CD4-positive, alpha-beta T cell (primary cell): ENCODE measurements at regions of chr20 and their contacts with region 1.

Region 1: GRCh38 chr20:46681032-46681854 is 8.0 kb downstream of the TP53RK start:
- DNase-seq: peak; percentile 42 to 78 (median 60)
- ATAC-seq: peak; percentile 91
- H3K4me3 ChIP-seq: no peak overlapping the region
- H3K4me3 Mint-ChIP-seq: peak overlapping the region; percentile 56
- H3K27ac ChIP-seq: peak overlapping the region in 1 of 2 donors; percentile 22
- H3K27ac Mint-ChIP-seq: peak overlapping the region; percentile 37
- H3K4me1 ChIP-seq: peaks cover 16% of the 10 kb centered on the region
- H3K4me1 Mint-ChIP-seq: peaks cover 50% of the 10 kb centered on the region
- H3K27me3 ChIP-seq: no peaks in the 10 kb centered on the region
- H3K27me3 Mint-ChIP-seq: no peaks in the 10 kb centered on the region
- CTCF ChIP-seq: peak; percentile 87

Region 2: GRCh38 chr20:46022411-46023147 is 658.7 kb before region 1 on chr20:
- CTCF ChIA-PET with region 1: no interaction called
- POLR2A ChIA-PET with region 1: no interaction called
- intact Hi-C with region 1: loop called in 1 of 2 experiments (anchors 2 kb)
- DNase-seq: peak; percentile 59 to 85 (median 69)
- ATAC-seq: peak; percentile 59
- H3K4me3 ChIP-seq: peak overlapping the region; percentile 25
- H3K4me3 Mint-ChIP-seq: peak overlapping the region; percentile 69
- H3K27ac ChIP-seq: no peak overlapping the region
- H3K27ac Mint-ChIP-seq: no peak overlapping the region
- H3K4me1 ChIP-seq: peaks cover 25% of the 10 kb centered on the region
- H3K4me1 Mint-ChIP-seq: peaks cover 23% of the 10 kb centered on the region
- H3K27me3 ChIP-seq: peaks cover 25 to 56% of the 10 kb centered on the region in 2 experiments
- H3K27me3 Mint-ChIP-seq: peaks cover 74% of the 10 kb centered on the region
- CTCF ChIP-seq: peak; percentile 75

Region 3: DNA sequence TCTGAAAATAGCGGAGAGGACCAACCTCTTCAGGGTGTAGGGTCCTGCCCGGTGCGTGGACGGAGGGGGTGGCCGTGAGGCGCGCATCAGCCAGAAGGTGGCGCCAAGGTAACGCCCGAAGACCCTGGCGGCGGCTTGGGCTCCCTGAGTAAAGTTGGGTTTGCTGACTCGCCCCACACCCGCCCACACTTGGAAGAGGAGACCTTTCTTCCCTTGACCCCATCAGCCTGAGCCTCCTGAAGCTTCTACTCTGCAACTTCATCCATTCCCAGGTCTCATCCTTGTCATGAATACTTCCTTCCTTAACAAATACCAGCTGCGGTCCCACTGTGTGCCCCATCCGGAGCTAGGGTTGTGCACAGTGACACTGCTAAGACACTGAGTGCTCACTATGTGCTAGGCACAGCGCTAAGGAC is 548.5 kb before region 1 on chr20:
- CTCF ChIA-PET with region 1: interaction called, 3 read pairs
- POLR2A ChIA-PET with region 1: no interaction called
- intact Hi-C with region 1: loop called (anchors 2 to 5 kb)
- DNase-seq: peak; percentile 26 to 73 (median 49)
- ATAC-seq: peak; percentile 68
- H3K4me3 ChIP-seq: no peak overlapping the region
- H3K4me3 Mint-ChIP-seq: no peak overlapping the region
- H3K27ac ChIP-seq: no peak overlapping the region
- H3K27ac Mint-ChIP-seq: no peak overlapping the region
- H3K4me1 ChIP-seq: no peaks in the 10 kb centered on the region
- H3K4me1 Mint-ChIP-seq: no peaks in the 10 kb centered on the region
- H3K27me3 ChIP-seq: peaks cover 15 to 26% of the 10 kb centered on the region in 2 experiments
- H3K27me3 Mint-ChIP-seq: peaks cover 65% of the 10 kb centered on the region
- CTCF ChIP-seq: peak; percentile 76

Region 4: GRCh38 chr20:46307139-46307998 is 373.9 kb before region 1 on chr20:
- CTCF ChIA-PET with region 1: no interaction called
- POLR2A ChIA-PET with region 1: no interaction called
- intact Hi-C with region 1: loop called (anchors 1 to 2 kb)
- DNase-seq: peak; percentile 56 to 88 (median 68)
- ATAC-seq: peak; percentile 84
- H3K4me3 ChIP-seq: peak overlapping the region; percentile 37
- H3K4me3 Mint-ChIP-seq: peak overlapping the region; percentile 65
- H3K27ac ChIP-seq: no peak overlapping the region
- H3K27ac Mint-ChIP-seq: no peak overlapping the region
- H3K4me1 ChIP-seq: peaks cover 22% of the 10 kb centered on the region
- H3K4me1 Mint-ChIP-seq: peaks cover 31% of the 10 kb centered on the region
- H3K27me3 ChIP-seq: peaks cover 46 to 67% of the 10 kb centered on the region in 2 experiments
- H3K27me3 Mint-ChIP-seq: peaks cover 83% of the 10 kb centered on the region
- CTCF ChIP-seq: peak; percentile 77

Region 5: DNA sequence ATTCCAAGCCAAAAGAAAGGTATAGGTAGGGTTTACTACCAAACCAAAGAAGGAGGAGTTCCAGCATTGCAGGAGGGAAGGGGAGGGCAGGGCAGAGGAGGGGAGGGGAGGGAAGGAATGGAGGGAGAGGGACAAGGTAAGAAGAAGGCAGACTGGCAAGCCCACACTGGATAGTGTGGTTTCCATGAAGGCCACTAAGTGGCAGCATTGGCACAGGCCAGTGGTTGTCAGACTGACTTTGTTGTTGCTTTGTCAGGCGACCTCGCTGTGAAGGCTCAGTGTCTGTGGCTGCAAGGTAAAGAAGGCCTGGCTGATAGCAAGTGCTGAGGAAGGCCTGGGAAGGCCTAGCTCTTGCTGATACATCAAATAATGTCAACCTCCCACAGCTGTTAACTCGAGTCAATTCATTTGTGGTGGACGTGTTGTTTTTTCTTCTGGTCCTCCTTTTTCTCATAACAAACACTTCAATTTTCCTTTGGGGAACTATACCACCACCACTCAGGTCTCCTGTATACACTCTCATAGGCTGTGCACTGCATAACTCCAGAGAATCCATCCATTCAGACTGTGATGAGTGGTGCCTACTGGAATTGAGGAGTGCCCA is 160.2 kb before region 1 on chr20:
- CTCF ChIA-PET with region 1: no interaction called
- POLR2A ChIA-PET with region 1: no interaction called
- intact Hi-C with region 1: loop called in 1 of 2 experiments (anchors 2 kb)
- DNase-seq: peak in 8 of 14 experiments; percentile 4 to 59 (median 23)
- ATAC-seq: no peak
- H3K4me3 ChIP-seq: no peak overlapping the region
- H3K4me3 Mint-ChIP-seq: no peak overlapping the region
- H3K27ac ChIP-seq: no peak overlapping the region
- H3K27ac Mint-ChIP-seq: no peak overlapping the region
- H3K4me1 ChIP-seq: no peaks in the 10 kb centered on the region
- H3K4me1 Mint-ChIP-seq: no peaks in the 10 kb centered on the region
- H3K27me3 ChIP-seq: peaks cover 0 to 3% of the 10 kb centered on the region in 2 experiments
- H3K27me3 Mint-ChIP-seq: peaks cover 48% of the 10 kb centered on the region
- CTCF ChIP-seq: no peak

Region 6: GRCh38 chr20:46696791-46697279 is 15.6 kb after region 1 on chr20:
- CTCF ChIA-PET with region 1: interaction called, 3 read pairs
- POLR2A ChIA-PET with region 1: no interaction called
- intact Hi-C with region 1: loop called in 1 of 2 experiments (anchors 1 kb)
- DNase-seq: no peak
- ATAC-seq: no peak
- H3K4me3 ChIP-seq: no peak overlapping the region
- H3K4me3 Mint-ChIP-seq: no peak overlapping the region
- H3K27ac ChIP-seq: no peak overlapping the region
- H3K27ac Mint-ChIP-seq: no peak overlapping the region
- H3K4me1 ChIP-seq: no peaks in the 10 kb centered on the region
- H3K4me1 Mint-ChIP-seq: peaks cover 6% of the 10 kb centered on the region
- H3K27me3 ChIP-seq: peaks cover 0 to 15% of the 10 kb centered on the region in 2 experiments
- H3K27me3 Mint-ChIP-seq: peaks cover 27% of the 10 kb centered on the region
- CTCF ChIP-seq: no peak

Region 7: GRCh38 chr20:47043086-47043485 is 361.8 kb after region 1 on chr20:
- CTCF ChIA-PET with region 1: no interaction called
- POLR2A ChIA-PET with region 1: no interaction called
- intact Hi-C with region 1: no loop called
- DNase-seq: no peak
- ATAC-seq: no peak
- H3K4me3 ChIP-seq: no peak overlapping the region
- H3K4me3 Mint-ChIP-seq: no peak overlapping the region
- H3K27ac ChIP-seq: no peak overlapping the region
- H3K27ac Mint-ChIP-seq: no peak overlapping the region
- H3K4me1 ChIP-seq: no peaks in the 10 kb centered on the region
- H3K4me1 Mint-ChIP-seq: no peaks in the 10 kb centered on the region
- H3K27me3 ChIP-seq: peaks cover 9 to 13% of the 10 kb centered on the region in 2 experiments
- H3K27me3 Mint-ChIP-seq: peaks cover 24% of the 10 kb centered on the region
- CTCF ChIP-seq: no peak